CD8-positive, alpha-beta memory T cell (primary cell): ENCODE measurements at regions of chr20 and their contacts with region 1.

Region 1: DNA sequence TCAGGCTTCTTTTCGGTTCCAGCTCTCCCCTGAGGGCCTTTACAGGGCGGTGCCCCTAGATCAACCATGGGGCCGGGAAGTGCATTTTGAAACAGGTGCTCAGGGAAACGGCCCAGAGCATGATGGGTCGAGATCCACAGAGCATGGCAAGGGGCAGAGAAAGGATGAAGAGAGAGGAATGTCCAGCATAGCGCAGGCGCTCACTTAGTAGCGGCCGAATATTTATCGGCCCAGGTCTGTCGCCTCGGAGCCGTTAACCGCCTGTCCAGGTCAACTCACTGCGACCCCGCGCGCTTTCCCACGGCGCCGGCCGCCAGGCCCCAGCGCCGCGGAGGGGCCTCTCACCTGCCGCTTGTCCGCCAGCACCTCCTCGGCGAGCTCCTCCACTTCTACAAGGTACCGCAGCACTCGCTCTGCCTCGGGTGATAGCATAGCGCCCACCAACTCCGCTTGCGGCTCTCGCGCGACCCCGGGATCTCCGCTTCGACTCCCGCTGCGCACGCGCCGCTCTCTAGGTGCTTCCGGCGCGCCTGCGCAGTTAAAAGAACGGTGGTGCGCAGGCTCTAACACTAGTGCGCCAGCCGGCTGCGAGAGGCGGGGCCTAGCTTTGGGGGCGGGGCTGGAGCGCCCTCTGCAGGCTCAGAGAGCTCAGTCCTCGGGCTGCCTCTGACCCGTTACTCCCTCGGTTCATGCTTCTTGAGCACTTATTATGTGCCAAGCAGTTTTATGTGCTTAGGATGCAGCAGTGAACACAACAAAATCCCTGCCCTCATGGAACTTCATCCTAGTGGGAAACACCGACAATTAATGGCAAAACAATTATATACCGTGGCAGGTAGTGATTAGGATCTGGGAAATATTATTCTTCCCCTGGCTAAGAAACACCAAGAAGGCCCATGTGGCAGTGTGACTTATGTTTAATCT is at the start of gene PDRG1:
- DNase-seq: peak; percentile 95 to 97 (median 95)
- H3K4me3 ChIP-seq: peak within 1 kb of the TSS; percentile 89
- H3K4me3 Mint-ChIP-seq: peak within 1 kb of the TSS; percentile 96 to 100 (median 98)
- H3K27ac ChIP-seq: peak within 1 kb of the TSS; percentile 84
- H3K27ac Mint-ChIP-seq: peak within 1 kb of the TSS; percentile 62 to 98 (median 96)
- H3K4me1 ChIP-seq: peaks cover 21% of the 10 kb centered on the region
- H3K4me1 Mint-ChIP-seq: peaks cover 30 to 38% (median 36%) of the 10 kb centered on the region in 3 donors
- H3K27me3 ChIP-seq: peaks cover 2% of the 10 kb centered on the region
- H3K27me3 Mint-ChIP-seq: peaks cover 12 to 16% of the 10 kb centered on the region in 2 donors
- total RNA-seq, gene PDRG1: 23.9 TPM

Region 2: DNA sequence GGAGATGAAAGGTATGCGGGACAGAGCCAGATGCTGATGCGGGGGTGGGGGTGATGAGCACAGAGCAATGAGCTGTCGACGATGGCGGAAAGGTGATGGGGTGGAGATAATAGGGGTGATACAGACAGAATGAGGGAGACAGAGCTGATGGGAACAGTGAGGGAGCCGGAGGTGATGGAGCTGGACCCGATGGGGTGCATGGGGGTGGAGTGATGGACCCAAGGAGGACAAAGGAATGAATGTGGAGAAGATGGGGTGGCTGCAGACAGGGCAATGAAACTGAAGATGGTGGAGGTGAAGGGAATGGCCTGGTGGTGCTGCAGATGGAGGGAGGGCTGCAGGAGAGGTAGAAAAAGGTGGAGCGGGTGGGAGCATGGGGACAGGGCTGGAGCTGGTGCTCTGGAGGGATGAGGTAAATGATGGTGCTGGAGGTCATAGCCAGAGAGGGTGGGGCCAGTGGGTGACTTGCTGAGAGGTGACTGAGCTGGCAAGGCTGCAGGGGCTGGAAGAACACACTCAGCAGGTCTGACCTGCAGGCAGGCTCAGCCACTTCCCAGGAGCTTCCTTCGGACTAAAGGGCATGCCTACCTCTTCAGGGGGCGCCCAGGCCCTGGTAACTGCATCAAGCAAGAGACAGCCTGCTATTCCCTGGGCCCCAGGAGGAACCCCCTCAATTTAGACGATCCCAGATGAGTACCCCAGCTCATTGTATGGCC is 100.4 kb before region 1 on chr20:
- CTCF ChIA-PET with region 1: interaction called, 43 read pairs
- POLR2A ChIA-PET with region 1: interaction called, 4 read pairs
- DNase-seq: no peak
- H3K4me3 ChIP-seq: no peak overlapping the region
- H3K4me3 Mint-ChIP-seq: no peak overlapping the region
- H3K27ac ChIP-seq: no peak overlapping the region
- H3K27ac Mint-ChIP-seq: no peak overlapping the region
- H3K4me1 ChIP-seq: no peaks in the 10 kb centered on the region
- H3K4me1 Mint-ChIP-seq: no peaks in the 10 kb centered on the region
- H3K27me3 ChIP-seq: peaks cover 14% of the 10 kb centered on the region
- H3K27me3 Mint-ChIP-seq: peaks cover 16 to 29% of the 10 kb centered on the region in 2 donors

Region 3: DNA sequence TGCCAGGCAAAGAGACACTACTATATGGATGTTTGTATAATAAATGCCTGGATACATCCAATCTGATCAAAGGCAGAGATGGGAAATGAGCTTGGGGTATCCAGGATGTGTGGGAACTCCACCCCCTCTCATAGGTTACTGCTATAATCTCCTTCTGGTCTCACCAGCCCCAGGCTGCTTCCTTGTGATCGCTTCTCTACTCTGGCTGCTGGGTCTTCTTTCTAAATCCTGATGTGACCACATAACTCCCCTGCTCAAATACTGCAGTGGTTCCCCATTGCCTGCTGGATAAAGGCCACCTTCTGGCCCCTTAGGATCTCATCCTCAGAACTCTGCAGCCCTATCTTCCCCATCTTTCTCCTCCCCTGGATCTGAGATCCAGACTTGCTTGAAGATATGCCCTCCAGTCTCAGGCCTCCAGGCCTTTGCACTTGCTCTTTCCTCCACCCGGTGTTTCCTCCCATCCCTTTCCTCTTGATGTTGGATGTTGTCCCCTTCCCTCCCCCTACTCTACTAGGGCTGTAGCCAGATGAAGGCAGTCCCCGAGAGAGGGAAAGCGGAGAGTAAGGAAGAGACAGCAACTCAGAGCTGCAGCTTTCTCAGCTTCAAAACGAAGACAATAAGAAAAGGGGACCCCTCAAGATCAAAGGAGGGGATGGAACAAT is 15.3 kb after region 1 on chr20:
- CTCF ChIA-PET with region 1: interaction called, 11 read pairs
- POLR2A ChIA-PET with region 1: no interaction called
- DNase-seq: no peak
- H3K4me3 ChIP-seq: no peak overlapping the region
- H3K4me3 Mint-ChIP-seq: peak overlapping the region; percentile 28 to 77 (median 52)
- H3K27ac ChIP-seq: no peak overlapping the region
- H3K27ac Mint-ChIP-seq: peak overlapping the region in 2 of 8 donors; percentile 45 to 91
- H3K4me1 ChIP-seq: no peaks in the 10 kb centered on the region
- H3K4me1 Mint-ChIP-seq: peaks cover 5 to 13% (median 8%) of the 10 kb centered on the region in 3 donors
- H3K27me3 ChIP-seq: peaks cover 25% of the 10 kb centered on the region
- H3K27me3 Mint-ChIP-seq: peaks cover 40 to 70% of the 10 kb centered on the region in 2 donors